PC-3 (cell line): ENCODE measurements at regions of chr16 and their contacts with region 1.

Region 1: DNA sequence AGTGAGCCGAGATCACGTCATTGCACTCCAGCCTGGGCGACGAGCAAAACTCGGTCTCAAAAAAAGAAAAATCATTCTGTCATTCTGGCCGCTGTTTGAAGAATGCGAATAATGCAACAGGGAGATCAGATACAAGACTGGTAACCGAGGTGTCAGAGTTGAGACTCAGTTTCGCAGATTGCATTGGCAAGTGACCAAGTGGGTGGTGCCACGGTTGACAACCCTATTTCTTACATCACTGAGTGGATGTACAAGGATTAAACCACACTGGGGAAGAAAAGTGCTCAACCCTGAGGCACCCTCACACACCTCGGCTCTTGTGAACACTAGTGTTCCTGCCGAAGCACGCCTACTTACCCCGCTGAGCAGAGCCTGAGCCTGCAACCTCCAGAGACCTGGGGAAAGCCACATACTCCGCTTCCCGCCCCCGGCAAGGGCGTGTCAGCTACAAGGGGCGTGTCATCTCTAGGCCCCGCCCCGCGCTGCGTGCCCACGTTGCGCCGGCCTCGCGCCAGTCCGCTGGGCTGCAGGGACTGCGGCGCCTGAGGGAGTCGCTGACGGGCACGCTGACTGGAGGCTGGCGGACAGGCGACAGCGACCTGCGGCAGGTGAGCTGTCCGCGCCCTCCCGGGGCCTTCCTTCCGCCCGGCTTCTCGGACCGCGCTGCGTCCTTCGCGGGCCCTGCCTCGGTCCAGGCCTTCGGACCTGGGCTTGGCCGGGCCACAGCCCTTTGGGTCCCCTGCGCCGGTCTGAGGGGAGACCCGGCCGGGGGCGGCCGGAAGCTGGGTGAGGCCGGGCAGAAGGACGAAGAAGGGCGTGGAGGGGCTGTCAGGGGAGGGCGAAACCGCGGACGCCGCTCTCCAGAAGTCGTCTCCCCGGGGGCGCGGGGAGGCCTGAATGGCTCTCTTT is at the start of gene HMOX2:
- DNase-seq: peak; percentile 93
- ATAC-seq: peak; percentile 84
- H3K4me3 ChIP-seq: peak within 1 kb of the TSS; percentile 93
- H3K27ac ChIP-seq: peak within 1 kb of the TSS; percentile 34
- H3K4me1 ChIP-seq: peaks cover 27% of the 10 kb centered on the region
- H3K27me3 ChIP-seq: no peaks in the 10 kb centered on the region
- CTCF ChIP-seq: 0 out of 2 replicates have a peak, but pooled peaks have one; percentile 28
- total RNA-seq, gene HMOX2: 86.9 and 88.1 TPM in 2 replicates

Region 2: GRCh38 chr16:4463549-4464163 is 12.5 kb before region 1 on chr16:
- CTCF ChIA-PET with region 1: no interaction called
- POLR2A ChIA-PET with region 1: interaction called, 12 read pairs
- intact Hi-C with region 1: no loop called
- DNase-seq: peak; percentile 77
- ATAC-seq: peak; percentile 69
- H3K4me3 ChIP-seq: peak overlapping the region; percentile 42; the same call in 1 of the 2 replicates
- H3K27ac ChIP-seq: peak overlapping the region; percentile 81
- H3K4me1 ChIP-seq: peaks cover 28% of the 10 kb centered on the region
- H3K27me3 ChIP-seq: no peaks in the 10 kb centered on the region
- CTCF ChIP-seq: no peak

Region 3: GRCh38 chr16:4500272-4500671 is 24.1 kb after region 1 on chr16:
- CTCF ChIA-PET with region 1: interaction called, 10 read pairs
- POLR2A ChIA-PET with region 1: no interaction called
- intact Hi-C with region 1: no loop called
- DNase-seq: peak; percentile 84
- ATAC-seq: peak; percentile 95
- H3K4me3 ChIP-seq: peak overlapping the region; percentile 56; the same call in 1 of the 2 replicates
- H3K27ac ChIP-seq: peak overlapping the region; percentile 46
- H3K4me1 ChIP-seq: peaks cover 51% of the 10 kb centered on the region
- H3K27me3 ChIP-seq: no peaks in the 10 kb centered on the region
- CTCF ChIP-seq: no peak